ENCODE measurements at regions of chr11 and their contacts with region 1.

Region 1: GRCh38 chr11:75214411-75214821 is 26.2 kb upstream of the TPBGL start:
- DNase-seq: peak; percentile 52 to 84 (median 78)
- ATAC-seq: peak; percentile 80
- H3K4me3 ChIP-seq: no peak overlapping the region
- H3K4me3 Mint-ChIP-seq: no peak overlapping the region
- H3K27ac ChIP-seq: no peak overlapping the region
- H3K27ac Mint-ChIP-seq: no peak overlapping the region
- H3K4me1 ChIP-seq: no peaks in the 10 kb centered on the region
- H3K4me1 Mint-ChIP-seq: no peaks in the 10 kb centered on the region
- H3K27me3 ChIP-seq: peaks cover 0 to 2% of the 10 kb centered on the region in 2 experiments
- H3K27me3 Mint-ChIP-seq: peaks cover 44% of the 10 kb centered on the region
- CTCF ChIP-seq: no peak

Region 2: DNA sequence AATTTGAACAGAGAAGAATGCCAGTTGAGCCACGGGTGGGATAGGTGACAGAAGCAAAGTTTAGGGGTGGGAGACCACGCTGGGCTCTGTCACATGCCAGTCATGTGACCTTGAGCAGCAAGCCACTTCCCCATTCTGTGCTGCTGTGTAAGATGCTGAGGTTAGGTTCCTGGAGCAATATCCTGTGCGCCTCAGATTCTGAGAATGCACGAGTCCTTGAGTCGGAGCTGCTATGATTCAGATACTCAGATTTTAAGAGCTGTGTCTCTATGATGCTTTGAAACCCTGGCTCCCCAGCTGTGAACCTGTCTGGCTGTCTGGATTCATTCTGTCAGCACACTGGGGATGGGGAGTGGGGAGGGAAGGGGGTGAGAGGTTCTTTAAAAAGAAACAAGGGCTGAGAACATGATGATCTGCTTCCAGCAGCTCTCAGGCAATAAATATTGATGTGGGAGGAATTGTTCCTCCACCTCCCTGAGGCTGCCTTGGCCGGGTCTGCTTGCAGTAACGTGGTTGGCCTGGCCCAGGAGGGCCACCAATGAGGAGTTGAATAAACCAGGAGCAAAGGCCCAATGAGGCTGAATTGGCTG is 39.5 kb before region 1 on chr11:
- CTCF ChIA-PET with region 1: no interaction called
- POLR2A ChIA-PET with region 1: no interaction called
- intact Hi-C with region 1: no loop called
- DNase-seq: peak in 1 of 9 experiments; percentile 28
- ATAC-seq: no peak
- H3K4me3 ChIP-seq: no peak overlapping the region
- H3K4me3 Mint-ChIP-seq: no peak overlapping the region
- H3K27ac ChIP-seq: no peak overlapping the region
- H3K27ac Mint-ChIP-seq: no peak overlapping the region
- H3K4me1 ChIP-seq: peaks cover 12% of the 10 kb centered on the region
- H3K4me1 Mint-ChIP-seq: peaks cover 13% of the 10 kb centered on the region
- H3K27me3 ChIP-seq: no peaks in the 10 kb centered on the region
- H3K27me3 Mint-ChIP-seq: no peaks in the 10 kb centered on the region
- CTCF ChIP-seq: no peak

Region 3: DNA sequence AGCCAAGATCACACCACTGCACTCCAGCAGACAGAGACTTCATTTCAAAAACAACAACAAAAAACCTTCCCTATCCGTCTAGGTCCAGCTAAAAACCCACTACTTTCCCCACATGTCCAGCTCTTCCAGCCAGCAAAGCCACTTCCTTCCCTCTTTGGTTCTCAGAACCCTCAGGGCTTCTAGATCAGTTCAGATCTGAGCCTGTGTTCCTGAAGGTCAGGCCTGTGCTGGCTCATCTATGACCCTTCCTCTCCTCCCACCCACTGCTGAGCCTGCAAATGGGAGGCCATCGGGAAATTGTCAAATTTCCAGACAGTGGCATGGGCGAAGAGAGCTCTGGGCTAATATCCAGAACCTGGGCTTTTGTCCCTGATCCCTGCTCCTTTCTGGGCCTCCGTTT is 25.7 kb before region 1 on chr11:
- CTCF ChIA-PET with region 1: no interaction called
- POLR2A ChIA-PET with region 1: no interaction called
- intact Hi-C with region 1: no loop called
- DNase-seq: no peak
- ATAC-seq: no peak
- H3K4me3 ChIP-seq: no peak overlapping the region
- H3K4me3 Mint-ChIP-seq: no peak overlapping the region
- H3K27ac ChIP-seq: no peak overlapping the region
- H3K27ac Mint-ChIP-seq: no peak overlapping the region
- H3K4me1 ChIP-seq: no peaks in the 10 kb centered on the region
- H3K4me1 Mint-ChIP-seq: no peaks in the 10 kb centered on the region
- H3K27me3 ChIP-seq: no peaks in the 10 kb centered on the region
- H3K27me3 Mint-ChIP-seq: no peaks in the 10 kb centered on the region
- CTCF ChIP-seq: no peak

Region 4: DNA sequence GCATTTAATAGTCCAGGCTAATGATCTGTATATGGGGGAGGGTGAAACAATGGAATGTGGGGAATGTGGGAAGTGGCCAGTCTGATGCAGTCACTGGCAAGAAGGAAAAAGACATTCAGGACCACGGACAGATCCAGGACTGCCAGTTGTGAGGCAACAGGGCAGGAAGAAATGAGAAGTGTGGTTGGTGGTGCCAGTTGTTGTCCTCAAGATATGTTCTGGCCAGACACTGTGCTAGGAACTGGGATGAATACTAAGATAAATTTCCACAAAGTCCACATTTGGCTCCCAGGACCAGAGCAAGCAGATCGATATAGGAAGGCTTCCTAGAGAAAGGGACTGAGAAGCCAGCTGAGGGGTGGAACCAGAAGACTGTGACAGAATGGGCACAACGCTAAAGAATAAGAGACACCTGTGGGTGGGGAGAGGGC is 19.3 kb after region 1 on chr11:
- CTCF ChIA-PET with region 1: no interaction called
- POLR2A ChIA-PET with region 1: no interaction called
- intact Hi-C with region 1: loop called (anchors 1 to 2 kb)
- DNase-seq: peak in 4 of 9 experiments; percentile 20 to 42 (median 34)
- ATAC-seq: no peak
- H3K4me3 ChIP-seq: no peak overlapping the region
- H3K4me3 Mint-ChIP-seq: no peak overlapping the region
- H3K27ac ChIP-seq: no peak overlapping the region
- H3K27ac Mint-ChIP-seq: no peak overlapping the region
- H3K4me1 ChIP-seq: no peaks in the 10 kb centered on the region
- H3K4me1 Mint-ChIP-seq: no peaks in the 10 kb centered on the region
- H3K27me3 ChIP-seq: no peaks in the 10 kb centered on the region
- H3K27me3 Mint-ChIP-seq: peaks cover 40% of the 10 kb centered on the region
- CTCF ChIP-seq: no peak

Measured in CD8-positive, alpha-beta T cell (primary cell).